Activated T-helper 2 cell treated with anti-CD3 and anti-CD28 coated beads, Interferon-gamma antibody, Interleukin-2, Interleukin-4, amounts not matched to agents 10 μg/mL and 5 μg/mL and 100 μg/mL, durations not matched to agents 14 hours and 24 hours and 36 hours (primary cell): ENCODE measurements at regions of chr12 and their contacts with region 1.

Region 1: DNA sequence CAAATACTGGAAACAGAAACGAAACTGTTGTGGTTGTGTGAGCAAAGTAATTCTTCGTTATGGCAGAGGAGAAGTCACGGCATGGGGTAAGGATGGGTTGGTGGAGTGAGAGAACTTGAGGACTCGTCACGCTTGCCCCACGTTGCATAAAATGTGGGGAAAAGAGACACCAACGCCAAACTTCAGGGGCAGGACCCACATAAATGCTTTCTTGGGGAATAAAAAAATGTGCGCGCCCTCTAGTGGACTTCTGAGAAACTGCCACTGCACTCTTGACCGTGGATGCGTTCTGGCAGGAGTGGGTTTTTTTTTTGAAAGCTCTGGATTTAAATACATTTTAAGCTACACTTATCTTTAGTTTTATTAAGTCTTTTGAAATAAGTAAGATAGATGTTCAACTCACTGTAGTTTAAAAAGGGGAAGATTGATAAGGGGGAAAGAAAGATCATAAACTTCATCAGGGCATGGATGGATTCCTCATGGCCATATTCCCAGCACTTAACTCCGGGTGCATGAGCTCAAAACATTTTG is 4.1 kb upstream of the IGF1 start:
- DNase-seq: peak; percentile 53
- H3K4me3 Mint-ChIP-seq: peak overlapping the region; percentile 71
- H3K27ac Mint-ChIP-seq: peak overlapping the region; percentile 96
- H3K4me1 Mint-ChIP-seq: peaks cover 36% of the 10 kb centered on the region
- H3K27me3 Mint-ChIP-seq: no peaks in the 10 kb centered on the region

Region 2: DNA sequence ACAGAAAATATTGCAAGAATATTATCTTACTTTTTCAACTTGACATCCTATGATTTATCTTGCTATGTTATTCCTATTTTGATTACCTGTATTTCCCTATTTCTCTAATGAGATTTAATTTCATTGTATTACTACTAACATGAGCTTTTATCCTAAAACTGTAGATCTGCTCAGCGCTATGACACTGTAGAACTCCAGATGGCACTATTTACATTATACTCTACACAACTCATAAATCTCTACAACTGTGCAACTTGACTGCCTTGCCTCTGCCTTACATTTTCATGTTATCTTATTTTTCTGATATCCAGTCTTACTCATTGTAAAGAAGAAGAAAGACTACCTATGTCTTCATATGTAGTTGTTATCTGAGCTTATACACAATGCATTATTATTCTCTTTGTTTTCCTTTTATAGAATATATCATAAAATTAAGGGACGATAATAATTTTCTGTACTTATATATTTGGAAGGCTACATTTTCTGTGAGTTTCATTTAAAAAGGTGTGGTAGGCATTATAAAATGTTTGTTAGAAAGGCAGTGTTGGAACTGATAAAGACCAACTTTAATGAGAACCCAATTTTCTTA is 388.7 kb before region 1 on chr12:
- intact Hi-C with region 1: loop called (anchors 10 kb)
- DNase-seq: no peak
- H3K4me3 Mint-ChIP-seq: no peak overlapping the region
- H3K27ac Mint-ChIP-seq: no peak overlapping the region
- H3K4me1 Mint-ChIP-seq: peaks cover 18% of the 10 kb centered on the region
- H3K27me3 Mint-ChIP-seq: no peaks in the 10 kb centered on the region

Region 3: GRCh38 chr12:102169922-102170621 is 314.4 kb before region 1 on chr12:
- intact Hi-C with region 1: loop called (anchors 2 kb)
- DNase-seq: no peak
- H3K4me3 Mint-ChIP-seq: no peak overlapping the region
- H3K27ac Mint-ChIP-seq: no peak overlapping the region
- H3K4me1 Mint-ChIP-seq: peaks cover 26% of the 10 kb centered on the region
- H3K27me3 Mint-ChIP-seq: no peaks in the 10 kb centered on the region

Region 4: DNA sequence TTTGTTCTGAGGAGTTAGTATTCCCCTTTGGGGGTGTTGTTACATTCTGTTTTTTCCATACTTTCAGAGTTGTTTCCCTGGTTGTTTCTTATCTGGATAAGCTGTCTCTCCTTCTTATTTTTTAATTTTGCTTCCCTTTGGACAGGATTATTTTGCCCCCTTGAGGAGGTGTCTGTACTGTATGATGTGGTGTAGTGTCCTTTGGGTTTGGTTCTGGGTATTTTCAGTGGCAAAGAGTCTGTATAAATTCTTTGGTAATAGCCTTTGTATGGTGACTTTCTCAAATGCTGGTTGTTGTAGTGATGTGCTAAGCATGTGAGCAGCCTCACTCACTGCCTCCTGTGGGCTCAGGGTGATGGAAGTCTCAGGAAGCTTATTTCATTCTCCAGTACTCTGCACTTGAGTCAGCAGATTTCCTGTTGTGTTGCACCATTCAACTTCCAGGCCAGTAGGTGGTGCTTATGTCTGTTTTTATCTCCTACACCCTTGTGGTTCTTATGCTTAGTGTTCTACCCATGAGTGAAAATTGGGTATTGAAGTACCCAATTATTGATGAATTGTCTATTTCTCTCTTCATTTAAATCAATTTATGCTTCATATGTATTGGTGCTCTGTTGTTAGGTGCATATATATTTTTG is 183.6 kb before region 1 on chr12:
- intact Hi-C with region 1: loop called (anchors 2 kb)
- DNase-seq: peak; percentile 12
- H3K4me3 Mint-ChIP-seq: no peak overlapping the region
- H3K27ac Mint-ChIP-seq: no peak overlapping the region
- H3K4me1 Mint-ChIP-seq: peaks cover 31% of the 10 kb centered on the region
- H3K27me3 Mint-ChIP-seq: peaks cover 18% of the 10 kb centered on the region

Region 5: DNA sequence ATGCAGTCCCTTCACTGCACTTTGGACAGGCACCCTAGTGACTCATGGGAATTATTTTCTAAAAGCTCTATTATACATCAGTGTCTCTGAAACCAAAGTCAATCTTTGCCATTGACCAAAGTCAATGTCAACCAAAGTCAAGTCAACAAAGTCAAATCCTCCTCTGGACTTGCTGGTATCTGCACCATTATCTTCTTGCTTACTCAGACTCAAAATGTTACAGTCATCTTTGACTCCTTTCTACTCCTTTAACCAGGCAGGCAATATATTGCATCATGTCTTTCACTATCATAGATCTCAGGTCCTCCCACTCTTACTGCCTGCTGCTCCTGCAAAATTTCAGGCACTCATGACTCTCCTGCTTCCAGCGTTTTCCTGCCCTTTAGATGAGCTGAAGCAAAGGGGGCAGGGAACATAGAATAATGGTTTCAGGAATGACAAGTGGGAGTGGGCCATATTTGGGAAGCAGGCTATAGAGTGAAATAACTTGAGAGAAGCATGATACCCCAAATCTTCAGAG is 43.4 kb before region 1 on chr12:
- intact Hi-C with region 1: loop called (anchors 1 kb)
- DNase-seq: no peak
- H3K4me3 Mint-ChIP-seq: no peak overlapping the region
- H3K27ac Mint-ChIP-seq: no peak overlapping the region
- H3K4me1 Mint-ChIP-seq: peaks cover 8% of the 10 kb centered on the region
- H3K27me3 Mint-ChIP-seq: no peaks in the 10 kb centered on the region

Region 6: DNA sequence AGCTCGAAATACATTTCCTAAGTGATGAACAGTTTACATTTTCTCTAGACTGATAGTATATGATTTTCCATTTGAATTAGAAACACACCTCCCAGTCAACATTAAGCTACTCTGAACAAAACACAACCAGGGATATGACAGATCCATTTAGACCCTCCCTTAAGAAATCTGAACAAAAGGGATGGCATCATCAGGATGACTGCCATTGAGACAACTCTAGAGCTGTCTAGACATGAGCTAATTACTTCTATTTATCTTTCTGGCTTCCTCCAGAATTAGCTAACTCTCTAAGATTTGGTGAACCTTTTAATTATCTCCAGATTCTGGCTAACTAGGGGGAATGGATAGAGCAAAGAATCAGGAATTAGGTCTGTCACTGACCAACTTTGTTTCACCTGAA is 88.7 kb after region 1 on chr12:
- intact Hi-C with region 1: no loop called
- DNase-seq: no peak
- H3K4me3 Mint-ChIP-seq: no peak overlapping the region
- H3K27ac Mint-ChIP-seq: no peak overlapping the region
- H3K4me1 Mint-ChIP-seq: no peaks in the 10 kb centered on the region
- H3K27me3 Mint-ChIP-seq: no peaks in the 10 kb centered on the region

Region 7: DNA sequence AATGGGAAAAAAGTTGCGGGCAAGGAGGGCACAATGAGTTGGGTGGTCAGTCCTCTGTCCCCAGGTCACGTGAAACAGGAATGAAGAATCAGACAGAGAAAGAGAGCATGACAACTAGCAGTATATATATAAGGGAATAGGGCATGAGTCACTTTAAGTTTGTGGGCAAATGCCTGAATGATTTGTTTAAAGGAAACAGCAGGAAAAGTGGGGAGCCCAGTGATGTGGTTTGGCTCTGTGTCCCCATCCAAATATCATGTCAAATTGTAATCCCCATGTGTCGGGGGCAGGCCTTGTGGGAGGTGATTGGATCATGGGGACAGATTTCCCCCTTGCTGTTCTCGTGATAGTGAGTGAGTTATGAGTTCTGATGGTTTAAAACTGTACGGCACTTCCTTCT is 191.2 kb after region 1 on chr12:
- intact Hi-C with region 1: no loop called
- DNase-seq: no peak
- H3K4me3 Mint-ChIP-seq: no peak overlapping the region
- H3K27ac Mint-ChIP-seq: no peak overlapping the region
- H3K4me1 Mint-ChIP-seq: no peaks in the 10 kb centered on the region
- H3K27me3 Mint-ChIP-seq: no peaks in the 10 kb centered on the region